Mammary epithelial cell (primary cell): ENCODE measurements at regions of chr1 and their contacts with region 1.

Region 1: DNA sequence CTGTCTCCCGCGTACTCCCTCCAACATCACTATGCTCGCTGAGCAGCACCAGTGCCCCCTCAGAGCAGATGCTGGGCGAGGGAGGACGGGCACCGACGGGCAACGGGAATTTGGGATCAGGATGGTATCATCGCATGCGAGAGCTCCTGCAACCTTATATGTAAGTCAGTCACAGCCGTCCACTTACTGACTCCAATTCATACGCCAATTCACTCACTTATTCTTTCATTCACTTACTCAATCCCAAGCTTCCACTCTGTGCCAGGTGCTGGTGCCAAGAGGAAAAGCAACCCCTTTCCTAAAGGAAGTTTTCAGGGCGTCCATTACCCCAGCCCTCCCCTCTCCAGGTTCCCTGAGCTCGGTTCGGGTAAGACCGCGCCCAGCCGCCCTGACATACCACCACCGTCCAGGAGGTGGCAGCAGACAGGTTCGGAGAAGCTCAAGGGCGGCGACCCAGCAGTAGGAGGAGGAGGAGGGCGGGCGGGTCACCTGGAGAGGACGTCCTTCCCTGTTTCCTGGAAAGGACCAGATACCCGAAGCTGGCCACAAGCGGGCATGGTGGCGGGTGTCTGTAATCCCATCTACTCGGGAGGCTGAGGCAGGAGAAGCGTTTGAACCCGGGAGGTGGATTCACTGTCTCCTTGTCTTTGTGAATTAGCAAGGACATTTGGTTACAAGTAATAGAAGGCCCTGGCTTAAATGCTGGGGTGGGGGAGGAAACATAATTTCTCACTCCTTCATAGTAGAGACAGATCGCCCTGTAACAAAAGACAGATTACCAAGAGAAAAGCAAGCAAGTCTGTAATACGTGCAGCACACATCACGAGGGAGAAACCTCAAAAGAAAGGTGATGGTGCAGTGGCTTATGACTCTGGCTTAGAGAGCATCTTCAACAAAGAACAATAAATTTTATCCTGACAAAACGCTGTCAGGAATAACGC is 7.6 kb upstream of the IL22RA1 start:
- DNase-seq: peak; percentile 88
- H3K4me3 ChIP-seq: peak overlapping the region; percentile 26 to 33 (median 29)
- H3K27ac ChIP-seq: peak overlapping the region; percentile 93
- H3K4me1 ChIP-seq: peaks cover 30% of the 10 kb centered on the region
- H3K27me3 ChIP-seq: no peaks in the 10 kb centered on the region
- CTCF ChIP-seq: peak; percentile 72 to 88

Region 2: DNA sequence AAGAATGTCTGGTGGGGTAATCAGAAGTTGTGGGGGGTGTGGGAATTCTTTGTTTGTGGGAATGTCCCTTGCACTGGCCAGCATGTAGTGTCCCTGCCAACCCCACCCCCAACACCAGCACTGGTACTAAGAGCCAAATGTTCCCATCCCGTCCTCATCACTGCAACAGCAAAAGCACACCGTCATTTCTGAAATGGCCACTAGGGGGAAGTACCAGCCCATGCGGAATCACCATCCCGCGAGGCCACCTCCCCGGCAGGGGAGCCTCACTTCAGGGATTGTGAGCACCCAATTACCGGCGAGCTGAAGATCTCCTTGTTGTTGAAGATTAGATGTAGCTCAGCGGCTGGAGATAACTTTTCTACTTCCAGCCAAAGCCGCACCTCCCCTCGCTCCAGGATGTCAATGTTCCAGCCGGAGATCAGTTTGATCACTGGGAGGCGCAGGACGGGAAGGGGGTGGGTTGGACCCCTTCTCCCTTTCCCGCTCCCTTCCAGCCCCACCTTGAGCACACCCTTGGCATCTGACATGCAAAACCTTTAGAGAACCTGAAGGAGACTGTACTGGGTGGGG is 79.6 kb before region 1 on chr1:
- CTCF ChIA-PET with region 1: no interaction called
- dilution Hi-C with region 1: no loop called
- in situ Hi-C with region 1: no loop called
- intact Hi-C with region 1: loop called (anchors 2 kb)
- DNase-seq: peak; percentile 75
- H3K4me3 ChIP-seq: no peak overlapping the region
- H3K27ac ChIP-seq: no peak overlapping the region
- H3K4me1 ChIP-seq: no peaks in the 10 kb centered on the region
- H3K27me3 ChIP-seq: no peaks in the 10 kb centered on the region
- CTCF ChIP-seq: peak; percentile 70 to 97

Region 3: GRCh38 chr1:24111996-24112779 is 38.3 kb before region 1 on chr1 and contains the start of gene MYOM3:
- CTCF ChIA-PET with region 1: interaction called, 6 read pairs
- dilution Hi-C with region 1: no loop called
- in situ Hi-C with region 1: no loop called
- intact Hi-C with region 1: loop called (anchors 2 kb)
- DNase-seq: peak; percentile 77
- H3K4me3 ChIP-seq: peak within 1 kb of the TSS in 1 of 3 experiments; percentile 33
- H3K27ac ChIP-seq: peak within 1 kb of the TSS; percentile 55
- H3K4me1 ChIP-seq: peaks cover 36% of the 10 kb centered on the region
- H3K27me3 ChIP-seq: no peaks in the 10 kb centered on the region
- CTCF ChIP-seq: peak; percentile 61 to 83
- total RNA-seq, gene MYOM3: 0.54 to 1.8 TPM

Region 4: DNA sequence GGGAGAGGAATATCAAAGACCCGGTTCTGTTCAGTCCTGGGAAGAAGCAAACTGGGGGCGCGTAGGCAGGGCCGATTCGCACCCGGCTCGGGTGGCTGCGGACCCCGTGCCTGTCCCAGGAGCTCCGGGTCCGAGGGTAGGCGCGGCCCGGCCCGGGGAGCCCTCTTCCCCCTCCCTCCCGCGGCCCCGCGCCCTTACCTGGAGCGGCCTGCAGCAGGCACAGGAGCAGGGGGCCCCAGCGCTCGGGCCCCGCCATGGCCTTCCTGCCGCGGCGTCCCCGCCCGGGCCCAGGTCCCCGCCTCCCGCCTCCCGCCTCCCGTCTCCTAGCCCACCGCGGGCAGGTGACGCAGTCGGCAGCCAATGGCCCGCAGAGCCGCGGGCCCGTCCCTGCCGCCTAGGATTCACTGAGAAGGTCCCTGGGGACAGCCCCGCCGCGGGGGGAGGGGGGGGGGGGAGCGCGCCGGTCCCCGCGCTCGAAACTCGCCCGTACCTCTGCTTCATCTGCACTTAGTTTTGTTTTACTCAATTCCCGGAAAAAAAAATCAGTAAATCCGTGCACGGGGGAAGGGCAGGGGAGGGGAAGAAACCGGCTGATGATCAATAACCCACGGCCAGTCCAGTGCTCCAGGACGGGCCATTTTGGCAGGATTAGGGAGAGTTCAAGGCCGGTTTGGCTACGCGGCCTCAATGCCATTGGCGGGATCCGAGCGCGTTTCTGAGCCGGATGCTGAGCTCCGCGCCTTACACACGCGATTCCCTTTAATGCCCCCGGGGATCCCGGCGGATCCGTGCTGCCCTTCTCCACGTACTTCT is 36.7 kb after region 1 on chr1 and contains the start of gene IFNLR1:
- CTCF ChIA-PET with region 1: interaction called, 3 read pairs
- dilution Hi-C with region 1: no loop called
- in situ Hi-C with region 1: no loop called
- intact Hi-C with region 1: loop called (anchors 1 kb)
- DNase-seq: peak; percentile 55
- H3K4me3 ChIP-seq: peak within 1 kb of the TSS; percentile 53 to 62 (median 58)
- H3K27ac ChIP-seq: peak within 1 kb of the TSS; percentile 49
- H3K4me1 ChIP-seq: peaks cover 40% of the 10 kb centered on the region
- H3K27me3 ChIP-seq: no peaks in the 10 kb centered on the region
- CTCF ChIP-seq: no peak
- total RNA-seq, gene IFNLR1: 7.8 to 12.5 TPM

Region 5: DNA sequence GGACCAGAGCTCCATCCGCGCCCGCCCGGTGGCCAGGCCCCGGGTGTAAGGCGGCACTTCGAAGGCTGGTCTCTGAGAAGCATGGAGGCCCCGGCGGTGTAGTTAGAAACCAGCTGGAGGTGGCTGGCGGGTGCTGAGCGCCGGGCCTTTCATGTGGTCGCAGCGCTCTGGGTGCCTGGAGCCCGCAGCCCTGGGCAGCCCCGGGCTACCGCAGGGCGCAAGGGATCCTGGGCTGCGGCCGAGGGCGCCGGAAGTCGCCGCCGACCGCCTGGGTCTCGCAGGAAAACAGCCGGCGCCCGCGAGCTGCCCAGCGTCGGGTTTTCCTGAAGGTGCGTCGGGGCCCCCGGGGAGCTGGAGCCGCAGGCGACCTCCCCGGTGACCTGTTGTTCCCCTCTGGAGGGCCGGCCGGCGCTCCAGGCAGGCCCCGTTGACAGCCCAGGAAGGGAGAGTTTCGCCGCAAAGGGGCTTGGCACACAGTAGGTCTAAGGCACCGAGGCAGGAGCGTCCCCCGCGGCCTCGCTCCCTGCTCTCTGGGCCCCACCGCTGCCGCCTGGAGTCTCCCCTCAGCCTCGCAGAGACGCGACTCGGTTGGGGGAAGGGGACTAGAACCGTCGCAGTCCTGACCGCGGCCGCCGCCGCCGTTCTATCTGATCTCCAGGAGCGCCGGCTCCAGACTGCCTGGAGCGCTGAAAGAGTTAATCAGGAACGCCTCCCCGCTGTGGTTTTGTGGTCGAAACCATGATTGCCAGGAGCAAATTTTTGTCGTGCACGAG is 171.4 kb after region 1 on chr1:
- CTCF ChIA-PET with region 1: no interaction called
- dilution Hi-C with region 1: loop called (anchors 10 kb)
- in situ Hi-C with region 1: no loop called
- intact Hi-C with region 1: loop called (anchors 2 kb)
- DNase-seq: peak; percentile 98
- H3K4me3 ChIP-seq: peak overlapping the region; percentile 17 to 57 (median 40)
- H3K27ac ChIP-seq: peak overlapping the region; percentile 92
- H3K4me1 ChIP-seq: peaks cover 65% of the 10 kb centered on the region
- H3K27me3 ChIP-seq: no peaks in the 10 kb centered on the region
- CTCF ChIP-seq: peak in 1 of 2 donors; percentile 12

Region 6: GRCh38 chr1:24642481-24643361 is 492.2 kb after region 1 on chr1 and contains the start of gene SRRM1:
- CTCF ChIA-PET with region 1: no interaction called
- dilution Hi-C with region 1: no loop called
- in situ Hi-C with region 1: no loop called
- intact Hi-C with region 1: loop called (anchors 2 kb)
- DNase-seq: peak; percentile 100
- H3K4me3 ChIP-seq: peak within 1 kb of the TSS; percentile 74 to 99 (median 95)
- H3K27ac ChIP-seq: peak within 1 kb of the TSS; percentile 98
- H3K4me1 ChIP-seq: peaks cover 17% of the 10 kb centered on the region
- H3K27me3 ChIP-seq: no peaks in the 10 kb centered on the region
- CTCF ChIP-seq: peak in 1 of 2 donors; percentile 33
- total RNA-seq, gene SRRM1: 56.0 to 146 TPM